Posterior cingulate gyrus (tissue), 11 donors: ENCODE measurements at regions of chr17 and their contacts with region 1.

Region 1: DNA sequence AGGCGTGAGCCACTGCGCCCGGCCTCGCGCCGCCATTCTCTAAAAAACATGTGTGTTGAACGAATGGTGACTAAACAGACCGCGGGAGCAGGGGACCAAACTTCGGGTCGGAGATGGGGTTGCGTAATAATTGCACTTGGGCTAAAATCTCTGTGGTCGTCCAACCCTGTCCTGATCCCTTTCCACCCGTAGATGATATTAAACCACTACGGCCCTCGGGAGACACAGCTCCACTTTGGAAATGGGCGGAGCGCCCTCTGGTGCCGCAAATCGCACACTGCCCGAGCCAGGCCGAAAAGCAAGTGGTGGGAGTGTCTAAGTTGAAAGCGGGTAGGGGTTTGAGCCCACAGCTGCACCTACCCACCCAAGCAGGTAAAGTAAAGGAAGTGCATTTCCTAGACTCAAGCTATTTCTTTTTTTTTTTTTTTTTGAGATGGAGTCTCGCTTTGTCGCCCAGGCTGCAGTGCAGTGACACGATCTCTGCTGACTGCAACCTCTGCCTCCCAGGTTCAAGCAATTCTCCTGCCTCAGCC is 17.0 kb downstream of the CAVIN1 start:
- DNase-seq: peak; percentile 74 to 97 (median 84)

Region 2: DNA sequence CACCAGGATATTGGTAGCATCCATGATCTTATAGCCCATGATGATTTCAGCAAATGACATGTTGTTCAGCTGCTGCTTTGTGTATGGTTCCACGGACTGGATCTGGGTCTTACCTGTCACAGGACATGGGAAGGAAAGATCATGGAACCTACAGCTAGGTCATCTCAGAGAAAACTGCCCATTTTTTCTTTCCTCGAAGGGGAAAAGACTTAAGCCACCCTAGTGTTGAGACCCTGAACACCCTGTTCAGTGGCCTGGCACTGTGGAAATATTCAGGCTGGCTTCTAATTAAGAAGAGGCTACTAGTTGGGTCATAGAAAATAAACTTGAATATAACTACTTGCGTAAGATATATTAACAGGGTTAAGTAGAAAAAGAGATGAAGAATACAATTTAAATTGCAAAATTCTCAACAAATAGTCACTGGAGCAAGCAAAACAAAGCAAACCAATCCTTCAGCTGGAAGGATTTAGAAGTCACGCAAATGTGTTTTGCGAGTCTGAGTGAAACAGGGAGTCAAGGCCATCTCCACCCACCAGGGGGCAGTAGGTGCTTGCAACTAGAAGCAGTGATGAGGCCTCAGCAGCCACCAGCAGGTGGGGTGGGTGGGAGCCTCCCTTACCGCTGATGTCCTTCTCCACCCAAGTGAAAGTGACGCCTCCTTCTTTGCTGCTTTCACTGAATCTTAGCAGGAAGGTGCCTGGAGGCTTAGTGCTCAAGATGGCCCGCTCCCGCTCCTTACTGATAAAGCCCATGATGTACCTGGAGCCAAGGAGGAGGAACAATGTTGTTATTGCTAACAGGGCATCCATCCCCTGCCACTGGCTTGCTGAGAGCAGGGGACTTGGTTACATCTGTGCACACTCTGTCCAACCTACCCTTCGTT is 83.4 kb before region 1 on chr17:
- intact Hi-C with region 1: loop called (anchors 1 kb)
- DNase-seq: peak; percentile 85 to 98 (median 93)

Region 3: DNA sequence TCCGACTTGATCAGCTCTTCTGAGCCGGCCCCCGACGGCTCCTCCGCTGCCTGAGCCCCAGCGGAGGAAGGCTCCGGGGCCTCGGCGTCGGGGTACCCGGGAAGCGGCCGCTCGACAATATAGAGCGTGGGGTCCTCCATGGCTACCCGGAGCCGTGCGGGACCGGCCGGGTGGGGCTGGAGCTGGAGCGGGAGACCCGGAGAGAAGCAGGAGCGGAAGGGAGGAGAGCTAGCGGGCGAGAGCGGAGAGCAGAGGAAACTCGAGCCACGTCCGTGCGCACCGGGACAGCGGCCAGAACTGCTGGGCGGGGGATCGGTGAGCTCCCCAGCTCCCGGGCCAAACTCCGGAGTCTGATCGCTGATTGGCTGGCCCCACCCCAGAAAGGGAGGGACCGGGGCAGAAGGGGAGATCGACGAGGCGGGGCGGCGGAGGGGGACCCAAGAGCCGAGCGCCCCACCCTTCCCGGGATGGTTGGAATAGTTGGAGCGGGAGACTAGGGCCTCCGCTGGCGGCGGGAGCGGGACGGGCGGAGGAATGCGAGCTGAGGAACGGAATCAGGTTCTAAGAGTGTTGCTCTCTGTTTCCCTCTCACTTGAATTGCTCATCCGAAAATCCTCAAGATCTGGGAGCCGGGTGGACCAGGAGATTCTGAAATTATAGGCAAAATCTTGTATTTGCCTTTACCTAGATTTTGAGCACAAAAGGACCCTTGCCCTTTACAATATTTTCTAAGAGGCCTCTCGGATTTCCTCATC is 17.1 kb after region 1 on chr17 and contains the start of gene CAVIN1:
- intact Hi-C with region 1: no loop called
- DNase-seq: peak; percentile 79 to 98 (median 89)

Region 4: DNA sequence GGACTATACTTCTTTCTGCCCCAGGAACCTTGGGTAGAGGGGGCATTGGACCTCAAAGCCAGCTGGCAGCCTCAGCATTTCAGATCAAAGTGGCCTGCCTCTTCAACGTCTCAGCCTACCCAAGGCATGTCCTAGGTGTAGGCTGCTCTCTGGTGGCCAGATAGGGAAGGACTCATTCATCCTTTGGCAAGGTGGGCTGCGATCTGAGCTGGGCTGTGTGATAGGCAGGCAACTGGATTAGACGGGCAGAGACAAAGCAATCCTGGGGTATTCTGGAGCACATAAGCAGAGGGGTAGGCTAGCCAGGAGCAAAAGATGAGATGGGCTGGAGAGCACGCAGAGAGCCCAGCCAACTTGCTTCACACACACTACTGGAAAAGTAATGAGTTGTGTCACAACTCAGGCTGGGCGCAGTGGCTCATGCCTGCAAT is 121.3 kb after region 1 on chr17:
- intact Hi-C with region 1: loop called (anchors 10 kb)
- DNase-seq: peak in 6 of 10 donors; percentile 58 to 91 (median 62)

Region 5: GRCh38 chr17:42618442-42619150 is 212.6 kb after region 1 on chr17:
- intact Hi-C with region 1: no loop called
- DNase-seq: peak in 2 of 10 donors; percentile 27 to 71